ENCODE measurements at regions of chr2 and their contacts with region 1.

Region 1: DNA sequence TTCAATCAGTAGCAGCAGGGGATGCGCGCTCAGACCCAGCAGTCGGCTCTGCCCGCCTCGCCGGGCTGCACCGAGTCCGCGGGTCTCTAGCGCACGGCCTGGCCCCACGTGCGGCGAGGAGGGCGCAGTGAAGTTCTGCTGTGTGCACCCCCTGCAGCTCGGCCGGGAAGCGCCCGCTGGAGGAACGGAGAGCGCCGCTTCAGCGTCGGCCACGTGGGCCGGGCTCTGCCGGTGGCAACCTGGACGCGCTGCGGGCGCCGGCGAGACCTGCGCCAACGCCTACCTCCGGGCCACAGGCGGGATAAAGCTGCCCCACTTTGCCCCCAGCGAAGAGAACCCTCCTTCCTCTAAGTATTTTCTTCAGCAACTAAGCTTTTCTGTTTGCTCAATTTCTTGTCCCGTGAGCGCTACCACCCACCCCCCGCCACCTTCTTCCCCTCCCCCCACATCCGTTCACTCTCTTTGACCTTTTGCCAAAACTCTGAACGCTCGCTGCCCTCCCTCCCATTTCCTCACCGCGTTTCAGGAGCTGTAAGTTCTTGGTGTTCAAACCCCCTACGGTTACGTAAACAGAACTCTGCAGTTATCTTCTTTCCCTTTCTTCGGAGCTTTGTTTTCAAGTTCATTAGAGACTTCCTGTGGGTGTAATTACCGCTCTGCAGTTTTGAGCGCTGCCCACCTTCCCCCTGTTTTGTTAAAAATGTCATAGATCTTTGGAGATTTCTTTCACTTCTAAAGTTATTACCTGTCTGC is 42.6 kb upstream of the EDAR start:
- DNase-seq: peak; percentile 51 to 96 (median 84)
- ATAC-seq: peak; percentile 72 to 83
- H3K4me3 Mint-ChIP-seq: peak overlapping the region; percentile 51 to 90 (median 72)
- H3K27ac Mint-ChIP-seq: peak overlapping the region; percentile 84 to 99 (median 97)
- H3K4me1 Mint-ChIP-seq: peaks cover 25 to 83% (median 72%) of the 10 kb centered on the region in 4 donors
- H3K27me3 Mint-ChIP-seq: no peaks in the 10 kb centered on the region

Region 2: GRCh38 chr2:108813732-108814131 is 217.9 kb before region 1 on chr2:
- POLR2A ChIA-PET with region 1: no interaction called
- DNase-seq: no peak
- ATAC-seq: no peak
- H3K4me3 Mint-ChIP-seq: no peak overlapping the region
- H3K27ac Mint-ChIP-seq: no peak overlapping the region
- H3K4me1 Mint-ChIP-seq: peaks cover 0 to 6% (median 2%) of the 10 kb centered on the region in 4 donors
- H3K27me3 Mint-ChIP-seq: no peaks in the 10 kb centered on the region

Region 3: DNA sequence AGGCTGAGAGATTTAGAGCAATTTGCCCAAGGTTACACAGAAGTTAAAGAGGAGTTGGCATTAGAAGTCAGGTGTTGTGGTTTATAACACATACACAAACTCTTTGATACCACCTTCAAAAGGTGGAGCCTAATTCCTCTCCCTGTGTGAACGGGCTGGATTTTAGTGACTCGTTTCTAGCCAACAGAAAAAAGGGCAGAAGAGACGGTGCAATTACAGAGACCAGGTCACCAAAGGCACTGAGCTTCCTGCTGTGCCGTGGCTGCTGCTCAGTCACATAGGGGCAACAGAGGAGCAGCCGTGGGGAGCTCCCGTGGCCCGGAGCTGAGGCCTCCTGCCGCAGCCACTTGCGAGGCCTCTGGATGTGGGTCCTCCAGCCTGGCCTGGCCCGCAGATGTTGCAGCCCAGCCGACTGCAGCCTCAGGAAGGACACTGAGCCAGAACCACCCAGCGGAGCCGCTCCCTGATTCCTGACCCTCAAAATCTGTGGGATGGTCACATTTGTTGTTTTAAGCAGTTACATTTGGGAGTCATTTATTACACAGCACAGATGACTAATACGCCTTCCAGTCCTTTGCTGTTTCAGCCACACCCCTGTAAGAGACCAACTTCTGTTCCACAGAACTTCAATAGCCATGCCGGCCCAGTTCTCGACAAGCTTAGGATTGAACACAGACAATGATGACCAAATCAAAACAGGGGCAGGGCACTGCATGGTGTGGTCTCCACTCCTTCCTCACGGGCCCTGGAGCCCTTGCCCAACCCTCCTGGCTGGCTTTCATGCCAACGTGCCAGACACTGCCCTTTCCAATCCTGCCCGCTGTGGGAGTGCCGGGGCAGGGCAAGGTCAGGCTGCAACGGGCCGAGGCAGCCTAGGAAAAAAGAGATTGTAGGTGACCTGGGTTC is 59.7 kb before region 1 on chr2:
- POLR2A ChIA-PET with region 1: interaction called, 23 read pairs
- DNase-seq: no peak
- ATAC-seq: peak in 1 of 2 donors; percentile 38
- H3K4me3 Mint-ChIP-seq: peak overlapping the region in 6 of 10 donors; percentile 3 to 50 (median 17)
- H3K27ac Mint-ChIP-seq: peak overlapping the region in 5 of 10 donors; percentile 11 to 67 (median 40)
- H3K4me1 Mint-ChIP-seq: peaks cover 42 to 88% (median 68%) of the 10 kb centered on the region in 4 donors
- H3K27me3 Mint-ChIP-seq: no peaks in the 10 kb centered on the region

Region 4: GRCh38 chr2:109009920-109010610 is 21.6 kb before region 1 on chr2:
- POLR2A ChIA-PET with region 1: interaction called, 12 read pairs
- DNase-seq: no peak
- ATAC-seq: no peak
- H3K4me3 Mint-ChIP-seq: no peak overlapping the region
- H3K27ac Mint-ChIP-seq: peak overlapping the region in 3 of 10 donors; percentile 28 to 61 (median 40)
- H3K4me1 Mint-ChIP-seq: peaks cover 11 to 43% (median 21%) of the 10 kb centered on the region in 4 donors
- H3K27me3 Mint-ChIP-seq: no peaks in the 10 kb centered on the region

Region 5: DNA sequence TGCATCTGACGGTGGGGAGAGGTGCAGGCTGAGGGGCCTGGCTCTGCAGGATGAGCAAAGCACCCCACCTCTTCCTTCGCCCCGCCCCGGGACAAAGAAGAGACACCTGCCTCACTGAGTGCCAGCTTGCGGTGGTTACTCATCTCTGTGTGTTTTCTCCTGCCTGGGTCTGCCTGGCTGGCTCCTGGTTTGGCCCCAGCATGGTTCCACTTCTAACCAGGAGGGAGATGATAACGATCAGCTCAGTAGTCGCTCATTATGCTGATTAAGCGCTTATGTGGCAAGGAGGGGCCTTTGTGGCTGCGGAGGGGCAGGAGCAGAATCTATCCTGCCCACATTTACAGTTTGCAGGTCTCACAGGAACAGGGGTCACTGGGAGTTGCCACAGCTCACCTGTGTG is 26.0 kb after region 1 on chr2:
- POLR2A ChIA-PET with region 1: interaction called, 19 read pairs
- DNase-seq: peak in 6 of 10 donors; percentile 21 to 52 (median 28)
- ATAC-seq: peak; percentile 91 to 97
- H3K4me3 Mint-ChIP-seq: peak overlapping the region in 9 of 10 donors; percentile 4 to 70 (median 31)
- H3K27ac Mint-ChIP-seq: peak overlapping the region in 7 of 10 donors; percentile 15 to 84 (median 33)
- H3K4me1 Mint-ChIP-seq: peaks cover 20 to 48% (median 36%) of the 10 kb centered on the region in 4 donors
- H3K27me3 Mint-ChIP-seq: no peaks in the 10 kb centered on the region

Region 6: DNA sequence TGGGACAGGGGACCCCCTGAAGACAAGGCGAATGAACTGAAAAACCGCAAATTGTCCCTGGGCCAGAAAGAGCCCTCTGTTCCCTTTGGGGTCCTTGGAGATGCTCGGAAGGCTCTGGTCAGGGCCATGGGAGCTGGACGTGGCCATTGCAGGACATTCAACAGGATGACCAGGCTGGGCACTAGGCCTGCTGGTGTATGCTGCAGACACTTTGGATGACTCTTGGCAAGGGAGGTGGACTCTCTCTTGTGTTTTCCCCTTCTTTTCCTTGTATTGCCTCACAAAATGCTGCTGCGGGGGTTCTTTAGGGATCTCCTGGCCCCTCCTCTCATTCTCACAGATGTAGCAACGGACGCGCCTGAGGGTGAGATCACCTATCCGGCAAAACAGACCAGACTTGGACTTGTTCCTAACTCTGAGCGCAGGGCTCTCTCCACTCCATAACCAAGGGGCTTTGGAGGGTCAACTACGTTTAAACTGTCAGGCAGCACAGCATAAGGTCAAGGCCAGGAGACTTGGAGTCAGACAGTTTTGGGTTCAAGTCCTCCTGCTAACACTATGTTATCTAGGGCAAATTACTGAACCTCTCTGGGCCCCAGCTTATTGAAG is 55.5 kb after region 1 on chr2:
- POLR2A ChIA-PET with region 1: no interaction called
- DNase-seq: no peak
- ATAC-seq: no peak
- H3K4me3 Mint-ChIP-seq: no peak overlapping the region
- H3K27ac Mint-ChIP-seq: peak overlapping the region in 2 of 10 donors; percentile 65 to 66
- H3K4me1 Mint-ChIP-seq: peaks cover 2 to 19% (median 13%) of the 10 kb centered on the region in 4 donors
- H3K27me3 Mint-ChIP-seq: no peaks in the 10 kb centered on the region

Region 7: GRCh38 chr2:109128048-109128465 is 96.4 kb after region 1 on chr2:
- POLR2A ChIA-PET with region 1: interaction called, 46 read pairs
- DNase-seq: peak; percentile 48 to 81 (median 66)
- ATAC-seq: peak; percentile 56 to 63
- H3K4me3 Mint-ChIP-seq: peak overlapping the region; percentile 78 to 97 (median 85)
- H3K27ac Mint-ChIP-seq: peak overlapping the region; percentile 28 to 93 (median 82)
- H3K4me1 Mint-ChIP-seq: peaks cover 29 to 52% (median 47%) of the 10 kb centered on the region in 4 donors
- H3K27me3 Mint-ChIP-seq: peaks cover 0 to 18% (median 0%) of the 10 kb centered on the region in 5 donors